HCT116 (cell line): ENCODE measurements at regions of chr12 and their contacts with region 1.

Region 1: DNA sequence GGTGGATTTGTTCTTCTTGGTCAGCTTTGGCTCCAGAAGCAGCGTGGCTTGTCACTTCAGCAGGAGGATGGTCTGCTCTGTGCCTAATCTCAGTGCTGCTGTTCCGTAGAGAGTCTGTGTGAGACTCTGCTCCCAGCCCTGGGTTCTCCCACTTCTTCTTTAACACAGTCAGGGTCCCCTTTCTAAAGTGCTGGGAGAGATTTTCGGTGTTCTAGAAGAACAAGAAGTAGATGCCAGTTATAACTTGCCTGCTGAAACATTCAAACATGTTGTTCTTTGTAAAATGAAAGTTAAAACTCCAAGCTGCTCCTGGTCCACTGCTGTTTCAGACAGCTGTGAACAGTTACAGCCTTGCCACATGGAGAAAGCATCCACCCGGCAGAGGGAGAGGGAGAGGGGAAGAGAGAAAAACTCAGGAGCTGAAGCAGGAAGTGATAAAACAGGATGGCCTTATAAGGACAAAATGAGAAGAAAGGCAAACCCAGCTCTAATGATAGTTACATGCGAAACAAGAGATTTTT is 55.2 kb upstream of the CERS5 start:
- DNase-seq: peak; percentile 52
- ATAC-seq: peak; percentile 44
- H3K4me3 ChIP-seq: peak overlapping the region; percentile 47 to 58
- H3K27ac ChIP-seq: peak overlapping the region; percentile 86
- H3K4me1 ChIP-seq: peaks cover 75 to 89% of the 10 kb centered on the region in 2 experiments
- H3K27me3 ChIP-seq: no peaks in the 10 kb centered on the region
- CTCF ChIP-seq: peak in 2 of 3 experiments; percentile 13 to 26; a peak in 1 of 6 replicates
- POLR2A ChIP-seq: no peak
- RAD21 ChIP-seq: peak; percentile 33; the same call in 1 of the 2 replicates

Region 2: DNA sequence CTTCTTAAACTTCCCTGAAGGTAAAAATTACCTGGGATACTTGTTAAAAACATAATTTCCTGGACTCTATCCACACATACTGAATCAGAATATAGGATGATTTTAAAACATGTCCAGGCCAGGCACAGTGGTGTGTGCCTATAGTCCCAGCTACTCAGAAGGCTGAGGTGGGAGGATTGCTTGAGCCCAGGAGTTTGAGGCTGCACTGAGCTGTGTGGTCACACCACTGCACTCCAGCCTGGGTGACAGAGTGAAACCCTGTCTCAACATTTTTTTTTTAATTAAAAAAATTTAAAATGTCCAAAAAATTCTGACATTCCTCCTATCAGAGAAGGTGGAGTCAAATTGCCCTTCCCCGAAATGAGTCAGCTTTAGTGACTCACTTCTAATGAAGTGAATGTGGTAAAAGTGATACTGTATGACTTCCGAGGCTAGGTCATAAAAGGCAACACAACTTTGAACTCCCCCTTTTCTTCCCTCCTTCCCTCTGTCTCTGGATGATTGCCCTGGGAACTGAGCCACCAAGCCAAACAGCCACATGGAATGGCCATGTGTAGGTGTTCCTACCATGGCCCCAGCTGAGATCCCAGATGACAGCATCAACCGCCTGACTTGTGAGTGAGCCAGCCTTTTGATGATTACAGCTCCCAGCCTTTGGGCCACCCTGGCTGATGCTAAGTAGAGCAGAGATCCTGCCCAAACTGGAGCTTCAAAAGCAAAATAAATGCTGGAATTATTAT is 24.7 kb after region 1 on chr12:
- CTCF ChIA-PET with region 1: interaction called, 3 read pairs
- POLR2A ChIA-PET with region 1: interaction called, 5 read pairs
- RAD21 ChIA-PET with region 1: no interaction called
- intact Hi-C with region 1: loop called (anchors 1 kb)
- DNase-seq: peak; percentile 99
- ATAC-seq: peak; percentile 82
- H3K4me3 ChIP-seq: no peak overlapping the region
- H3K27ac ChIP-seq: peak overlapping the region; percentile 61
- H3K4me1 ChIP-seq: peaks cover 74 to 93% of the 10 kb centered on the region in 2 experiments
- H3K27me3 ChIP-seq: no peaks in the 10 kb centered on the region
- CTCF ChIP-seq: no peak
- POLR2A ChIP-seq: no peak
- RAD21 ChIP-seq: peak; percentile 45; the same call in 1 of the 2 replicates

Region 3: GRCh38 chr12:50252977-50253602 is 30.8 kb after region 1 on chr12:
- CTCF ChIA-PET with region 1: interaction called, 3 read pairs
- POLR2A ChIA-PET with region 1: interaction called, 10 read pairs
- RAD21 ChIA-PET with region 1: no interaction called
- intact Hi-C with region 1: no loop called
- DNase-seq: no peak
- ATAC-seq: no peak
- H3K4me3 ChIP-seq: no peak overlapping the region
- H3K27ac ChIP-seq: no peak overlapping the region
- H3K4me1 ChIP-seq: peaks cover 86 to 100% of the 10 kb centered on the region in 2 experiments
- H3K27me3 ChIP-seq: no peaks in the 10 kb centered on the region
- CTCF ChIP-seq: no peak
- POLR2A ChIP-seq: no peak
- RAD21 ChIP-seq: no peak

Region 4: DNA sequence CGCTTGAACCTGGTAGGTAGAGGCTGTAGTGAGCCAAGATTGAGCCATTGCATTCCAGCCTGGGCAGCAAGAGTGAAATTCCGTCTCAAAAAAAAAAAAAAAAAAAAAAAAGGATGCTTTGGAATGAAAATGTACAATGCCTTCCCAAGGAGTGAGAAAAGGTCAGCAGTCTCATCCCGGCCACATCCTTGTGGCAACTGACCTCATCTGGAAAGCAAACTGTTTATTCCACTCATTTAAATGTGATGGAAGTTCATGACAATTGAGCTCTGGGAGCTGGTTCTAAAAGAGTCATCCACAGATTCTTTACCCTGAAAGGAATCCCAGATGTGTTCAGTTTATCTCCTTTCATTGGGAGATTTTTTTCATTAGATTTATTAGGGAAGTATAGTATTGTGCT is 80.4 kb after region 1 on chr12:
- CTCF ChIA-PET with region 1: no interaction called
- POLR2A ChIA-PET with region 1: no interaction called
- RAD21 ChIA-PET with region 1: no interaction called
- intact Hi-C with region 1: loop called (anchors 5 kb)
- DNase-seq: no peak
- ATAC-seq: no peak
- H3K4me3 ChIP-seq: no peak overlapping the region
- H3K27ac ChIP-seq: no peak overlapping the region
- H3K4me1 ChIP-seq: peaks cover 21 to 37% of the 10 kb centered on the region in 2 experiments
- H3K27me3 ChIP-seq: no peaks in the 10 kb centered on the region
- CTCF ChIP-seq: no peak
- POLR2A ChIP-seq: no peak
- RAD21 ChIP-seq: no peak

Region 5: DNA sequence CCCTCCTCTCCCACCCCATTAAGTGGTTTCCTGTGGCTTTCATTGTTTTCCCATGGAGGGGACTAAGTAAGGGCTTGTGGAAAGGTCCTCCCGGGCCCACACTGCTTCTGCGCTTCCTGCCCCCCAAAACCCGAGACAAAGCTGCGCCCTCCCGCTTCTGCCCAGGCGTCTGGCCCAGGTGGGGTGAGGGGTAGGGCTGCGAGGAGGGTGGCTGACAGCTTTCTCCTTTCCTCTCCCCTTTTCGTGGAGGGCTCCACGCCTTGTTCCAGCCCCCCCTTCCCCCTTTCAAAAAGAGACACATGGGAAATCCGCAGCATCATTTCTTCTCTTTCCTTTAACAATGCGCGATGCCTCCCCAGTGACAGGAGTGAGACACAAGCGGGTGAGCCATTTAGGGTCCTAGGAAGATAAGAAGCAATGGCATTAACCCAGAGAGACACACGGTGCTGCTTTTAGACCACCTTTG is 283.1 kb after region 1 on chr12:
- CTCF ChIA-PET with region 1: no interaction called
- POLR2A ChIA-PET with region 1: no interaction called
- RAD21 ChIA-PET with region 1: no interaction called
- intact Hi-C with region 1: no loop called
- DNase-seq: no peak
- ATAC-seq: peak; percentile 38
- H3K4me3 ChIP-seq: peak overlapping the region; percentile 77 to 90
- H3K27ac ChIP-seq: peak overlapping the region; percentile 84
- H3K4me1 ChIP-seq: peaks cover 0 to 21% of the 10 kb centered on the region in 2 experiments; a peak in 3 of 4 replicates
- H3K27me3 ChIP-seq: no peaks in the 10 kb centered on the region
- CTCF ChIP-seq: no peak
- POLR2A ChIP-seq: no peak
- RAD21 ChIP-seq: no peak

Region 6: GRCh38 chr12:50542448-50542847 is 320.1 kb after region 1 on chr12:
- CTCF ChIA-PET with region 1: no interaction called
- POLR2A ChIA-PET with region 1: no interaction called
- RAD21 ChIA-PET with region 1: no interaction called
- intact Hi-C with region 1: no loop called
- DNase-seq: peak; percentile 77
- ATAC-seq: peak; percentile 68
- H3K4me3 ChIP-seq: no peak overlapping the region
- H3K27ac ChIP-seq: no peak overlapping the region; the same call in 1 of the 2 replicates
- H3K4me1 ChIP-seq: peaks cover 58 to 90% of the 10 kb centered on the region in 2 experiments
- H3K27me3 ChIP-seq: no peaks in the 10 kb centered on the region
- CTCF ChIP-seq: no peak
- POLR2A ChIP-seq: no peak
- RAD21 ChIP-seq: 0 out of 2 replicates have a peak, but pooled peaks have one; percentile 7